ENCODE measurements at regions of chr5 and their contacts with region 1.

Region 1: DNA sequence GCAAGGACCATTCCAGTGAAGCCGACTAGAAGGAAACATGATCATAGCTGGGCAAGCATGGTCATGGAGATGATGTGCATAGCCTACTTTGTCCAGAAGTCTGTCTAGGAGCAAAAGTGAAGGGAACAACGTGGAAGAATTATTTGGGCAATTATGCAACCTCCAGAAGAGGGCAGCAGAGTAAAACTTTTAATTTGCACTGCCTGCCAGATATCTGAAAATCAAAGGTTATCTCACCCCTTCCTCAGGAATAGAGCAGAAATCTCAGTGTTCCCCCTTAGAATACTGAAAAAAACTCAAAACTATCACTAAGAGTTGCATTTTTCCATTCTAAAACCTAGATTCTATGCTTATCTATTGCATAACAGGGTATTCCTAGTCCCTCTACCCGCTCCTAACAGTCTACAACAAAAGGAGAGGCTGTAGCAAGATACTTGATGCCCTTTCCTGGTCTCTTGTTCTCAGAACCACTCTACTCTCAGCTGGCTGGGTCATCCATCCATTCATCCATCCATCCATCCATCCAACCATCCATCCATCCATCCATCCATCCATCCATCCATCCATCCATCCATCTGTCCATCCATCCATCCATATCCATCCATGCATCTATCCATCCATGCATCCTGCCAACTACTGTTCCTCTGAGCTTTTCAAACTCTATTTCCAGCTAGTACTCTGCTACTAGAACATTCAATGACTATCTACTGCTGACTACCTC is 8.4 kb upstream of the SETD9 start:
- DNase-seq: no peak
- H3K4me3 ChIP-seq: no peak overlapping the region
- H3K27ac ChIP-seq: no peak overlapping the region
- H3K4me1 ChIP-seq: no peaks in the 10 kb centered on the region
- H3K27me3 ChIP-seq: peaks cover 0 to 2% of the 10 kb centered on the region in 2 donors
- CTCF ChIP-seq: peak; percentile 64 to 68

Region 2: GRCh38 chr5:56774957-56775356 is 126.1 kb before region 1 on chr5:
- intact Hi-C with region 1: no loop called
- DNase-seq: no peak
- H3K4me3 ChIP-seq: no peak overlapping the region
- H3K27ac ChIP-seq: no peak overlapping the region
- H3K4me1 ChIP-seq: no peaks in the 10 kb centered on the region
- H3K27me3 ChIP-seq: no peaks in the 10 kb centered on the region
- CTCF ChIP-seq: no peak

Region 3: GRCh38 chr5:56964173-56964572 is 63.2 kb after region 1 on chr5:
- intact Hi-C with region 1: no loop called
- DNase-seq: no peak
- H3K4me3 ChIP-seq: no peak overlapping the region
- H3K27ac ChIP-seq: no peak overlapping the region
- H3K4me1 ChIP-seq: no peaks in the 10 kb centered on the region
- H3K27me3 ChIP-seq: peaks cover 0 to 14% of the 10 kb centered on the region in 2 donors
- CTCF ChIP-seq: no peak

Region 4: DNA sequence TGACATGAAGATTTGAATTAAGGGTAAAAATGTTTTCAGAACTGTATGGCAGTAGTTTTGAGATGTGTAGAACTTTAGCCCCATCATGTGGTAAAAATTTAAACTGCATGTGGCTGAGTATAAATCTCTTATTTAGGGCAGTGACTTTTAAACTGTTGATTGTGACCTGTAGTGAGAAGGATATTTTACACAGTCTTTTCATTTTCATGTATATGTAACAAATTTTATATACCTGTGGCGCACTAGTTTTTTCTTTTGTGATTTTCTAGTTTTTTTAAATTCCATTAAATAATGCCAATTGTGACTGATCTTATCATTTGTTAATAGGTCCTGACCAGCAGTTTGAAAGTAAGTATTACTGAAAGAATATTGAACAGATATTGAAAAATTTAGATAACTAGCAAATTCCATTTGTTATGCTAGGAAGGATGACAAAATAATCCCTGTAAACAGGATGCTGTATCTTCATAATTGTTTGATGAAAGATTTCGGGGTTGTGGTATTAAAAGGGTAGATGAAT is 320.1 kb after region 1 on chr5:
- intact Hi-C with region 1: loop called (anchors 5 kb)
- DNase-seq: no peak
- H3K4me3 ChIP-seq: no peak overlapping the region
- H3K27ac ChIP-seq: no peak overlapping the region
- H3K4me1 ChIP-seq: peaks cover 0 to 25% (median 9%) of the 10 kb centered on the region in 4 donors
- H3K27me3 ChIP-seq: no peaks in the 10 kb centered on the region
- CTCF ChIP-seq: peak; percentile 89 to 91

Measured in tibial artery (tissue), 4 donors.